ENCODE measurements at regions of chr9 and their contacts with region 1.

Region 1: GRCh38 chr9:113376634-113377567 is at the start of gene HDHD3:
- DNase-seq: peak; percentile 89
- H3K4me3 Mint-ChIP-seq: peak within 1 kb of the TSS; percentile 80
- H3K27ac Mint-ChIP-seq: peak within 1 kb of the TSS; percentile 81
- H3K4me1 Mint-ChIP-seq: peaks cover 17% of the 10 kb centered on the region
- H3K27me3 Mint-ChIP-seq: no peaks in the 10 kb centered on the region
- total RNA-seq, gene HDHD3: 17.2 to 17.7 TPM

Region 2: GRCh38 chr9:113309204-113309813 is 67.6 kb before region 1 on chr9:
- CTCF ChIA-PET with region 1: no interaction called
- POLR2A ChIA-PET with region 1: no interaction called
- intact Hi-C with region 1: loop called (anchors 2 kb)
- DNase-seq: peak; percentile 32
- H3K4me3 Mint-ChIP-seq: no peak overlapping the region
- H3K27ac Mint-ChIP-seq: no peak overlapping the region
- H3K4me1 Mint-ChIP-seq: no peaks in the 10 kb centered on the region
- H3K27me3 Mint-ChIP-seq: peaks cover 3% of the 10 kb centered on the region

Region 3: DNA sequence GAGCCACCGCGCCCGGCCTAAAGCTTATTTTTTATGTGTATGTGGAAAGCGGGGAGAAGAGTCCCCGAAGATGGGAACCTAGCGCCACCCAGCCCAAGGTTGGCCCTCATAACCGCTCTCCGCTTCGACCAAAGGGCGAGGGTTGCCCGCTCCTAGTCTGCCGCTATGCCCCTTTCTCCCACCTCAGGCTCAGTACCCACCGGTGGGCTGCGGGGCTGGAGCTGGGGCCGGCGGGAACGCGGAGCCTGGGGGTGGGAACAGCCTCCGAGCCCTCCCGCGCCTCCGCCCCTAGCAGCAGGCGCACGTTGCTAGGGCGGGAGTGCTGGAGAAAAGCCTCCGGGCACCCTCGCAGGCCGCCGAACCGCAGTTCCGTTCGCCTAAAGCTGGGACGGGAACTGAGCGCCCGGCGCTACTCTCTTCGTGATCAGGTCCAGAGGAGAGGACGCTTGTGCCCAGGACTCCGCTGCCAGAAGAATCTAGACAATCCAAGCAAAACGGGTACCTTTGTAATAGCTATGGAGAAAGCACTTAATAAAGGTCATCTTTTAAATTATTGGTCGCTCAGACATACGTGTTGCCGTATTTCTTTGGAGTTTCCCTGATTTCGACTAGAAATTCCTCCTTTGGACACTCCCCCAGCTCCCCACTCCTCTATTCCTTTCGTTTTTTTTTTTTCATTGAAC is 36.7 kb before region 1 on chr9 and contains the start of gene WDR31:
- CTCF ChIA-PET with region 1: no interaction called
- POLR2A ChIA-PET with region 1: interaction called, 7 read pairs
- intact Hi-C with region 1: loop called (anchors 2 kb)
- DNase-seq: peak; percentile 88
- H3K4me3 Mint-ChIP-seq: peak within 1 kb of the TSS; percentile 72
- H3K27ac Mint-ChIP-seq: no peak within 1 kb of the TSS
- H3K4me1 Mint-ChIP-seq: peaks cover 27% of the 10 kb centered on the region
- H3K27me3 Mint-ChIP-seq: no peaks in the 10 kb centered on the region
- total RNA-seq, gene WDR31: 1.6 to 2.4 TPM

Region 4: DNA sequence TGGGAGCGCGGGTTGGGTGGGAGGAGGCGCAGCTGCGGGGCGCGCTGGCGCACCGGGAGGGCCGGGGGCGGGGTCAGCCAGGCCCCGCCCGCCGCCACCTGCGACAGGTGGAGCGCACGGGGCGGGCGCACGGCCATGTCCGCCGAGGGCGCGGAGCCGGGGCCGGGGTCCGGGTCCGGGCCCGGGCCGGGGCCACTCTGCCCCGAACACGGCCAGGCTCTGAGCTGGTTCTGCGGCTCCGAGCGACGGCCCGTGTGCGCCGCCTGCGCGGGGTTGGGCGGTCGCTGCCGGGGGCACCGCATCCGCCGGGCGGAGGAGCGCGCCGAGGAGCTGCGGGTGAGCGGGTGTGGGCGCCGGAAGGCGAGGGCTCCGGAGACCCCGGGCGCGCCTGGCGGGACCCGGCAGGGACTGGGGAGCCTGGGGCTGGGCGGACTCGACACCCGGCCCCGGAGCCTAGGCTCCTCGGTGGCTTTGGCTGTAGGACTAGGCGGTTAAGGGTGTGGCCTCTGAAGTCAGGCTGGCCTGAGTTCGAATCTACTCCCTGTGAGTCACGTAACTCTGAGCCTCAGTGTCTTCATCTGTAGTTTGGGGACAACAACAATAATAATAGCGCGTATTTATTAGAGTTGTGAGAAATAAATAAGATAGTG is 27.3 kb before region 1 on chr9 and contains the start of gene BSPRY:
- CTCF ChIA-PET with region 1: interaction called, 5 read pairs
- POLR2A ChIA-PET with region 1: interaction called, 11 read pairs
- intact Hi-C with region 1: loop called (anchors 1 kb)
- DNase-seq: peak; percentile 41
- H3K4me3 Mint-ChIP-seq: peak within 1 kb of the TSS; percentile 77
- H3K27ac Mint-ChIP-seq: peak within 1 kb of the TSS; percentile 69
- H3K4me1 Mint-ChIP-seq: peaks cover 56% of the 10 kb centered on the region
- H3K27me3 Mint-ChIP-seq: peaks cover 32% of the 10 kb centered on the region
- total RNA-seq, gene BSPRY: 7.6 to 8.5 TPM

Region 5: DNA sequence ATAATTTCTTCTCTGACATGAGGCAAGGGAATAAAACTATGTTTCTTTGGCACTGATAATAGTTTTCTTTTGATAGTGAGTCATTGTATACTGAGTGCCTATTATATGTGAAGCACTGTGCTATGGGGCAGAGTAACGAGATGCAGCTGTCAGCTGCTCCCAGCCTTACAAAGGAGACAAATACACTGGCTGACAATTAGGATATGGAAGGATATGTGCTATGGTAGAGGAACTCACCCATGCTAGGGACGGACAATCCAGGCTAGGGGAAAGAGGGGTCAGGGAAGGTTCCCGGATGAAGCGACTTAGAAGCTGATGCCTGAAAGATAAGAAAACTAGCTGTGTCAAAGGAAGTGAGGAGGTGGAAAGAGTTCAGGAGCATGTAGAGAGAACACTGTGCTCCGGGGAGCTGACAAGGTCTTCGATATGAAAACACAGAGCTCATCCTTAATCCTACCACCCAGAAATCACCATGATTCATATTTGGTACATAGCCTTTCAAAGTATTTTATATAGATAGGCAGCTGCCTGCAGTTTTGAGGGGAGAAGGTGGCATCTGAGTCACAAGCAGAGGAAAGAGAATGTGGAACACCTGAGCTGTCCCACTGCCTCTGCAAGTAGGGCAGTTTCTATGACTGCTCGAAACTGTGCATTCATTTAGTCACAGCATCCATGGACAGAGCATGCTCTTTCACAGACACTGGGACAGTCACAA is 15.4 kb before region 1 on chr9:
- CTCF ChIA-PET with region 1: no interaction called
- POLR2A ChIA-PET with region 1: interaction called, 10 read pairs
- intact Hi-C with region 1: loop called (anchors 2 kb)
- DNase-seq: peak; percentile 57
- H3K4me3 Mint-ChIP-seq: no peak overlapping the region
- H3K27ac Mint-ChIP-seq: peak overlapping the region; percentile 55
- H3K4me1 Mint-ChIP-seq: peaks cover 11% of the 10 kb centered on the region
- H3K27me3 Mint-ChIP-seq: peaks cover 5% of the 10 kb centered on the region

Region 6: GRCh38 chr9:113682297-113682771 is 305.4 kb after region 1 on chr9:
- CTCF ChIA-PET with region 1: no interaction called
- POLR2A ChIA-PET with region 1: no interaction called
- intact Hi-C with region 1: no loop called
- DNase-seq: peak; percentile 62
- H3K4me3 Mint-ChIP-seq: no peak overlapping the region
- H3K27ac Mint-ChIP-seq: no peak overlapping the region
- H3K4me1 Mint-ChIP-seq: peaks cover under 1% of the 10 kb centered on the region
- H3K27me3 Mint-ChIP-seq: peaks cover 54% of the 10 kb centered on the region

Measured in activated CD4-positive, alpha-beta memory T cell treated with anti-CD3 and anti-CD28 coated beads for 36 hours (primary cell).